Spleen (tissue), 13 donors: ENCODE measurements at regions of chr5 and their contacts with region 1.

Region 1: GRCh38 chr5:58460732-58461286 is 923 bp upstream of the PLK2 start:
- DNase-seq: no peak
- H3K4me3 ChIP-seq: peak overlapping the region; percentile 43 to 78 (median 69)
- H3K27ac ChIP-seq: peak overlapping the region; percentile 91 to 99 (median 97)
- H3K4me1 ChIP-seq: peaks cover 0 to 37% (median 15%) of the 10 kb centered on the region in 6 donors
- H3K27me3 ChIP-seq: peaks cover 0 to 20% (median 0%) of the 10 kb centered on the region in 7 donors
- CTCF ChIP-seq: peak; percentile 60 to 86 (median 75)
- POLR2A ChIP-seq: no peak

Region 2: DNA sequence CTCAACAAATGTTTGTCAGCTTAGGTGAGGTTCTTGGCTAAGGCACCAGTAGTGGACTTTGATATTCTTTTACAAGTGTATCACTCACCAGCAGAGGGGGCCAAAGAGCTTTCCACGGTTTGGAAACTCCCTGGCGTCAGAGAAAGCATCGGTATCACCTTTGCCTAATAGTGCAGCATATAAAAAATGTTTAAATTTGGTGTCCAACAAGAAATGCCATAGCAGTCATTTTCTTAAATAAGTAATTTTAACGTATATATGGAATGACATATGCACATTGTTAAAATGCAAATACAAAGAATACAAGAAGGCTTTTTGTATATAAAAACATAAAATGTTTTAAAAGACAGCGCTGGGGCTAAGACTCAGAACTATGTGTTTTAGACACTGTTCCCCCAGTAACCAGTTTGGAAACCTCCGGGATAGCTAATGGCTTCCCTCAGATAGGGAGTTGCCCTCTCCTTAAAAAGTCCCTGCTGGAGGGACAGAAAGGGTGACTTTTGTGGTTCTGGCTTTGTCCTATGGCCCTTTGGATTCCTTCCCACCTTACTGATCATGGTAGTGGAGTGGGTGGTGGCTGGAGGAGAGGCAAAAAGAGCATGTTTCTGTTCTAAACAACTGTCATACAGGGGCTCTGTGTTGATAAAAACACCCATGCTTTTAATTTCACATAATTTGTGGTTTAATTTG is 1162.4 kb before region 1 on chr5:
- intact Hi-C with region 1: loop called (anchors 5 kb)
- DNase-seq: peak; percentile 78
- H3K4me3 ChIP-seq: peak overlapping the region in 2 of 8 donors; percentile 19 to 59
- H3K27ac ChIP-seq: peak overlapping the region in 2 of 8 donors; percentile 19 to 40
- H3K4me1 ChIP-seq: peaks cover 7 to 16% (median 14%) of the 10 kb centered on the region in 6 donors
- H3K27me3 ChIP-seq: no peaks in the 10 kb centered on the region
- CTCF ChIP-seq: peak in 9 of 11 experiments; percentile 39 to 79 (median 73)
- POLR2A ChIP-seq: no peak

Region 3: DNA sequence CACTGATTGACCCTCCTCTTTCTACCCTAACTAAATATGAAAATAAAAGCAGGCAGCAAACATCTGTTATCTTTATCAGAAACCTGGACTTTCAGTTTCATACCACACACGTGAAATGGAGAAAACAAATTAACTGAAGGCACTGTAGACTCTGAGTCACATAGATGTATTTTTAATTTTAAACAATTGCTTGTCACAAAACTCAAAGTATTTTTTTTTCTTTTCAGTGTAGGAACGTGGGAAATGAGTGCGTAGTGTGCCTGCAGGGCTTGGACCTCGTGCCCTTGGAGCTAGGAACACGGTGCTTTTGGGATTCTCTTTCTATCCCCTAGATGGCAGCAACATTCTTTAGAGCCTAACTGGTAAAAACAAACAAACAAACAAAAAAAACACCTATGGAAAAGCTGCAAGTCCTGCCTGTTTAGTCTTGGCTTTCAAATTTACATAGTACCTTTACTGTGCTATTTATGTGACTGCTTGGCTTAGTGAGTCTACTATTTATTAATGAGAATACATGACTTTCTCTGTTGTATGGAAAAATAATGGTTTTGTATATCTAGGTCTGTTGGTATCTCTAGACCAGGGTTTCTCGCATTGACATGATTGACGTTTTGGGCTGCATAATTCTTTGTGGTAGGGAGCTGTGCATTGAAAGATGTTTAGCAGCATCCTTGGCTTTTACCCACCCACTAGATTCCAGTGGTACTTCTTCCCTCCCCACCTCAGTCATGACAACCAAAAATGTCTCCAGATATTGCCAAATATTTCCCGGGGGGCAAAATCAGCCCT is 961.4 kb before region 1 on chr5:
- intact Hi-C with region 1: loop called (anchors 5 kb)
- DNase-seq: no peak
- H3K4me3 ChIP-seq: peak overlapping the region in 4 of 8 donors; percentile 8 to 59 (median 29)
- H3K27ac ChIP-seq: peak overlapping the region in 2 of 8 donors; percentile 44 to 55
- H3K4me1 ChIP-seq: peaks cover 3 to 26% (median 19%) of the 10 kb centered on the region in 6 donors
- H3K27me3 ChIP-seq: no peaks in the 10 kb centered on the region
- CTCF ChIP-seq: peak in 10 of 11 experiments; percentile 6 to 73 (median 63)
- POLR2A ChIP-seq: no peak

Region 4: DNA sequence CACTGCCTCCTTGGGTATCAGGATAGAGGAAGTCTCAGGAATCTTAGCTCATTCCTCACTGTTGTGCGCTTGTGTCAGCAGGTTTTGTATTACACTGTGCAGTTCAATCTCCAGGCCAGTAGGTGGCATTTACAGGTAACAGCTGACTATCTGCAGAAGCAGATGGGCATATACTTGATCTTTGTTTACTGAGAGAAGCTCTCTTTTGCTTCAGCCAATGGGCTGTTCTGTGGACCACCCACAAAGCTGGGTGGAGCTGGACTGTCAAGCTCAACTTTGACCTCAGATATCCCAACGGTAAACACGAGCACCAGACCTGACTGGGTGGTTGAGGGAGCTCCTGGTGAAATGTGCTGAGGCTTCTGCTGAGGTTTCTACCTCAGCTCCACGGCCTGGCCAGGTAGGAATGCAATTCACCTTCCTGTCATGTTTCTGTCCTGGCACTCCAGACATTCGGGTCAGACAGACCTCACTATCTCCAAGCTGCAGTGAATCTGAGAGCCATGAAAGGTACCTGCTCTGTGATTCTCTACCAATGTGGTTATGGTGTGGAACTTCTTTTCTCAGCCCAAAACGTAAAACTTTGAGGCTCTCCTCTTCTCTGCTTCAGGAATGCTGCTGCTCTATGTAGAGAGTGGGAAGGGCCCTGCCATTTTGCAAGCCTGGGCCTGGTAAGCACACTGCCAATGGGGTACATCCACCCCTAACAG is 810.3 kb before region 1 on chr5:
- intact Hi-C with region 1: loop called (anchors 10 kb)
- DNase-seq: no peak
- H3K4me3 ChIP-seq: no peak overlapping the region
- H3K27ac ChIP-seq: no peak overlapping the region
- H3K4me1 ChIP-seq: no peaks in the 10 kb centered on the region
- H3K27me3 ChIP-seq: no peaks in the 10 kb centered on the region
- CTCF ChIP-seq: peak; percentile 14 to 69 (median 53)
- POLR2A ChIP-seq: no peak

Region 5: GRCh38 chr5:57779383-57780223 is 681.2 kb before region 1 on chr5:
- intact Hi-C with region 1: loop called (anchors 5 kb)
- DNase-seq: no peak
- H3K4me3 ChIP-seq: no peak overlapping the region
- H3K27ac ChIP-seq: peak overlapping the region in 4 of 8 donors; percentile 11 to 48 (median 40)
- H3K4me1 ChIP-seq: peaks cover 0 to 4% (median 0%) of the 10 kb centered on the region in 6 donors
- H3K27me3 ChIP-seq: no peaks in the 10 kb centered on the region
- CTCF ChIP-seq: peak in 7 of 11 experiments; percentile 28 to 57 (median 38)
- POLR2A ChIP-seq: no peak

Region 6: DNA sequence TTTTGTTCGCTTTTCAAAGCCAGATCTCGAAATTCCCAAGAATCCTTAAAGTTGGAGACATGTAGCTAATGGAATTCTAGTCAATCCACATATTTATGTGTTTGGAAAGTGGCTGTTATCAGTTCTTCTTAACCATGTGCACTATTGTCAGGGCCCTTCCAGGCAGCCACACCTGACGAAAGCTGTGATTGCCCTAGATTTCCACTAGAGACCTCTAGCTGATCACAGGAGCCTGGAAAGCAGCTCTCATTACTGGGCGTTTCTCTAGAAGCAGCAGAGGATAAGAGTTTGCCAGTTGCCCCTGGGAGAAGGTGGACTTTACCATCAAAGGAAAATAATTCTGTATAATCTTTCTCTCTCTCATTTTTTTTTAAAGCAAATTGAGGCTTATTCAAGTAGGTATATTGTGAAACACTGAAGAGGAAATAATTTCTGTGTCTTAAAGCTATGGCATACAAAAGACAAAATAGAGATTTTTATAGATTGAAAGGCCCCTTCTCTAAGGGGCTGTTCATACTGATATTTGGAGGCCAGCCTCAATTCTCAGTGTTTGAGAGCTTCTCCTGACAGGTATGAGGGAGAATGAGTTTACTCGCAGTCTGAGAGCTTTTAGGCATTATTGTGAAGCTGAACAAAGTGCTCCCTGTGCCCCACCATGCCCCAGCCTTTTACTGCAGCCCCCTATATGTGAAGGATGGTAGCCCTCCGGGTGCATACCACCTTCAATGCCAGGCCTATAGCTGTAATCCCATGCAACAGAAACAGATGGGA is 572.8 kb before region 1 on chr5:
- intact Hi-C with region 1: loop called (anchors 5 kb)
- DNase-seq: no peak
- H3K4me3 ChIP-seq: no peak overlapping the region
- H3K27ac ChIP-seq: peak overlapping the region in 3 of 8 donors; percentile 4 to 46 (median 18)
- H3K4me1 ChIP-seq: peaks cover 0 to 8% (median 0%) of the 10 kb centered on the region in 6 donors
- H3K27me3 ChIP-seq: no peaks in the 10 kb centered on the region
- CTCF ChIP-seq: peak in 8 of 11 experiments; percentile 13 to 60 (median 45)
- POLR2A ChIP-seq: no peak

Region 7: GRCh38 chr5:58188262-58188651 is 272.6 kb before region 1 on chr5:
- intact Hi-C with region 1: no loop called
- DNase-seq: no peak
- H3K4me3 ChIP-seq: no peak overlapping the region
- H3K27ac ChIP-seq: peak overlapping the region in 1 of 8 donors; percentile 31
- H3K4me1 ChIP-seq: no peaks in the 10 kb centered on the region
- H3K27me3 ChIP-seq: no peaks in the 10 kb centered on the region
- CTCF ChIP-seq: no peak
- POLR2A ChIP-seq: no peak

Region 8: GRCh38 chr5:58273711-58274110 is 187.1 kb before region 1 on chr5:
- intact Hi-C with region 1: no loop called
- DNase-seq: no peak
- H3K4me3 ChIP-seq: no peak overlapping the region
- H3K27ac ChIP-seq: peak overlapping the region; percentile 9 to 76 (median 60)
- H3K4me1 ChIP-seq: no peaks in the 10 kb centered on the region
- H3K27me3 ChIP-seq: no peaks in the 10 kb centered on the region
- CTCF ChIP-seq: no peak
- POLR2A ChIP-seq: no peak